ENCODE measurements at regions of chr4 and their contacts with region 1.

Region 1: DNA sequence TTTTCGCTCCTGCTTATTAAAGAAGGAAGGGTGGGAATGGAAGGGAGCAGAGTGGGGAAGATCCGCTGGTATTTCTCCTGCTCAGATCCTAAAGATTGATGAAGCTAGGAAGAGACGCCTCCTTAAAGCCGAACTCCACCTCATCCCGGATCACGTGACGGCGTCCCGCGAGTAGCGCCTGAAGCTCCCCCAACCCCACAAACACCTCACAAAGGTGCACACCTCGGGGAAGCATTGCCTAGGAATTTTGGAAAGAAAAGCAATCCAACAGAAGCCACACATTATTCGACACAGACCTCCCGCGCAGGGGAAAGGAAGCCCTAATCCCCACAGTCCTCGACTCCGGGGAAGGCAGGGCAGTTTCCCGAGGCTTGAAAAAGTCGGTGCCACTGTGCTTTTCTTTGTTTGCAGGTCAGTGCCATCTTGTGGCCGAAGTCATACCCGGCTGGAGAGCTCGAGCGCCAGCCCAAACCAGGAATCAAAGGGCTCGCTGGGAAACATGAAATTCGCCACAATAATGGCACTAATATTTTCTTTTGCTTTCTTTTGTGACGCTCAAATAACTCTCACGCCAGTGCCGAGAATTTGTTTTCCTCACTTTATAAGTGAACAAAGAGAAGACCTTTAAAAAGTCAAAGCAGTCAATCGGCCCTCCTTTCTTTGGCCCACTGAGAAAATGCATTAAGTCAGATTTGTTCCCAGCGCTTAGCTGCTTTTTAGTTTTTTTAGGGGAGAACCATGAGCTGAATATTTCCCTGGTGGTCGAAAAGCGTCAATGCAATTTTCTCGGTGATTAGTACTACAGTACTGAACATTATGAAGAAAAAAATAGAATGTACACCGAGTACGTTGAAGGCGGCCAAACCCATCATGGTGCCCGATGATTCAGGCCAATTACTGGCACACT is at the start of gene NPY1R:
- DNase-seq: peak; percentile 77 to 85 (median 82)
- ATAC-seq: peak; percentile 93
- H3K4me3 ChIP-seq: peak within 1 kb of the TSS; percentile 25 to 58
- H3K27ac ChIP-seq: peak within 1 kb of the TSS in 2 of 4 donors; percentile 69 to 79
- H3K4me1 ChIP-seq: no peaks in the 10 kb centered on the region
- H3K27me3 ChIP-seq: no peaks in the 10 kb centered on the region
- CTCF ChIP-seq: peak; percentile 54 to 82 (median 73)
- POLR2A ChIP-seq: peak in 2 of 3 donors; percentile 2 to 48
- total RNA-seq, gene NPY1R: 4.9 to 14.0 TPM

Region 2: GRCh38 chr4:162494935-162495334 is 837.8 kb before region 1 on chr4:
- intact Hi-C with region 1: loop called (anchors 5 kb)
- DNase-seq: no peak
- ATAC-seq: no peak
- H3K4me3 ChIP-seq: no peak overlapping the region
- H3K27ac ChIP-seq: no peak overlapping the region
- H3K4me1 ChIP-seq: peaks cover 6% of the 10 kb centered on the region
- H3K27me3 ChIP-seq: no peaks in the 10 kb centered on the region
- CTCF ChIP-seq: no peak
- POLR2A ChIP-seq: no peak

Region 3: DNA sequence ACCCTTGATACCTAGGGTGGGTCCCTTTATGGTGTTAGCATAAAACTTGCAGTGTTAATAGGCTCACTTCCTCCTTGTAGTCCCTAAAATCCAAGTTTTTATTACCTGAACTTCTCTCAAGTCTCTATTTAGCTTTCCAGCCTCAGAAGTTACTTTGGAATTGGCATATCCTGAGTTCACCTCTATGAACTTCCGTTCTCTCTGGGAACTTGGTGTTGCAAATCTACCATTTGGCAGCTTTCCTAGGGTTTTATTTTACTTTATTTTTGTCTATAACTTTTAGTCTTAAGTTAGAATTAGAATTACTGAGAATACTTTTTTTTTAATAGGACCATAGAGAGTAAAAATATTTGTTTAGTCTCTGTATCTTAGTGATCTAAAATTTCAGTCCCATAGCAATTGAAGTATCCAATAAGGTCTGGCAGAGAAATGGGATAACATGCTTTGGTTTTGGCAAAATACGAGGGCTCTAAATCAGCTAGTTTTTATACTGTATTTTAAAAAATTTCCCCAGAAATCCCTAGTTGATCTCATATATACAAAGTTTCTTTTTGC is 135.8 kb before region 1 on chr4:
- intact Hi-C with region 1: no loop called
- DNase-seq: no peak
- ATAC-seq: no peak
- H3K4me3 ChIP-seq: no peak overlapping the region
- H3K27ac ChIP-seq: no peak overlapping the region
- H3K4me1 ChIP-seq: no peaks in the 10 kb centered on the region
- H3K27me3 ChIP-seq: no peaks in the 10 kb centered on the region
- CTCF ChIP-seq: no peak
- POLR2A ChIP-seq: no peak